CD4-positive, alpha-beta T cell (primary cell): ENCODE measurements at regions of chrX and their contacts with region 1.

Region 1: DNA sequence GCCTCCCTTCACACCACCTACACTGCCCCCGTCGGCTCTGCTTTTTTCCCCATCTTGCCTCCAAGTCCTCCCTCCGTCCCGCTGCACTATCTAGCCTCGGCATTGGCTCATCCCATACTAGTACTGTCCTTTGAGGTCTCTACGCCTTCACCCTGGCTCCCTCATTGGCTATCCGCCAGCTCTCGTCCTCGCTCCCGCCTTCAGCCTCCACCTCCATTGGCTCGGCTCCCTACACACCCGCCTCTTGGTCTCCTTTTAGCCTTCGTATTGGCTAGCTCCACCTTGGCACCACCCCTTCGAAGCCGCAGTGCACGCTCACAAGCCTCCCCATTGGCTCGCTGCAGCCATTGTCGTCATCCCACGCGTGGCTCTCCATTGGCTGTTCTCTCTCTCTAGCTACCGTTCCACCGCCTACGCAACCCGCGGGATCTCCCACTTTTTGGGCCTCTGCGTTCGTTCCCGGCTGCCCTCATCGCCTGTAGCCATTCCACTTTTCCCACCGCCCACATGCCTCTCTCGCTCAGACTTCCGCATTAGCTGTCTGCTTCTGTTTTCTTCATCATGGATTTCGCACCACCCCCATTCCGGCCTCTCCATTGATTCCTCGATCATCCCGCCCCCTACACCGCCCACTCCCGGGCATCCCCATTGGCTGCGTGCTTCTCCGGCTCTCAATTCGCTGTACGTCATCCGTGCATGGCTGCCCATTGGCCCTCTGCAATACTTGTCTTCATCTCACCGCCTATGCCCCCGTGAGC is 404 bp upstream of the PPP1R3F start:
- DNase-seq: peak; percentile 85 to 98 (median 90)
- ATAC-seq: peak; percentile 82
- H3K4me3 ChIP-seq: peak overlapping the region; percentile 69
- H3K4me3 Mint-ChIP-seq: peak overlapping the region; percentile 91
- H3K27ac ChIP-seq: peak overlapping the region; percentile 96 to 98
- H3K27ac Mint-ChIP-seq: peak overlapping the region; percentile 99
- H3K4me1 ChIP-seq: peaks cover 57% of the 10 kb centered on the region
- H3K4me1 Mint-ChIP-seq: peaks cover 49% of the 10 kb centered on the region
- H3K27me3 ChIP-seq: no peaks in the 10 kb centered on the region
- H3K27me3 Mint-ChIP-seq: no peaks in the 10 kb centered on the region
- CTCF ChIP-seq: no peak

Region 2: DNA sequence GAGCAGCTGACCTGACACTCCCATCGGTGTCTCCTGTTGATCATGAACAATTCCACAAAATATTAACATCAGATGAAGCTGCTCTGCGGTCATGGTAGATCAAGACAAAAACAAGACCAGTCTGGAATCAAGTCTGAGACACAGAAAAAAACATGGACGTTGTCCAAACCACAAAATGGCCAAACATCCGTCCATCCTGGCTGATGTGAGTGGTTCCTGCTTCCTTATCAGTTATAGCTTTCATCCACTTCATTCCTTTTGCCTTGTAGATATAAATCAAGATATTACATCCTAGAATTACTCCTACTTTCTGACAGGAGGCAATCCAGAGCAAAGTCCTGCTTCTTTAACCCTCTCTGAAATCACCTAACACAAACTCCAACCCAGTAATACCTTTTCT is 405.0 kb before region 1 on chrX:
- CTCF ChIA-PET with region 1: no interaction called
- POLR2A ChIA-PET with region 1: no interaction called
- intact Hi-C with region 1: no loop called
- DNase-seq: no peak
- ATAC-seq: no peak
- H3K4me3 ChIP-seq: no peak overlapping the region
- H3K4me3 Mint-ChIP-seq: no peak overlapping the region
- H3K27ac ChIP-seq: no peak overlapping the region
- H3K27ac Mint-ChIP-seq: no peak overlapping the region
- H3K4me1 ChIP-seq: no peaks in the 10 kb centered on the region
- H3K4me1 Mint-ChIP-seq: no peaks in the 10 kb centered on the region
- H3K27me3 ChIP-seq: no peaks in the 10 kb centered on the region
- H3K27me3 Mint-ChIP-seq: peaks cover 7% of the 10 kb centered on the region
- CTCF ChIP-seq: no peak

Region 3: GRCh38 chrX:49199906-49200771 is 69.0 kb before region 1 on chrX and contains the start of gene SYP:
- CTCF ChIA-PET with region 1: no interaction called
- POLR2A ChIA-PET with region 1: no interaction called
- intact Hi-C with region 1: loop called in 1 of 2 experiments (anchors 5 kb)
- DNase-seq: peak; percentile 79 to 93 (median 88)
- ATAC-seq: peak; percentile 99
- H3K4me3 ChIP-seq: peak within 1 kb of the TSS; percentile 51
- H3K4me3 Mint-ChIP-seq: peak within 1 kb of the TSS; percentile 69
- H3K27ac ChIP-seq: no peak within 1 kb of the TSS
- H3K27ac Mint-ChIP-seq: peak within 1 kb of the TSS; percentile 69
- H3K4me1 ChIP-seq: peaks cover 21% of the 10 kb centered on the region
- H3K4me1 Mint-ChIP-seq: peaks cover 14% of the 10 kb centered on the region
- H3K27me3 ChIP-seq: peaks cover 0 to 3% of the 10 kb centered on the region in 2 experiments
- H3K27me3 Mint-ChIP-seq: no peaks in the 10 kb centered on the region
- CTCF ChIP-seq: no peak
- total RNA-seq, gene SYP: 0.17 to 0.69 TPM

Region 4: GRCh38 chrX:49230469-49231232 is 38.5 kb before region 1 on chrX:
- CTCF ChIA-PET with region 1: no interaction called
- POLR2A ChIA-PET with region 1: interaction called, 18 read pairs
- intact Hi-C with region 1: loop called in 1 of 2 experiments (anchors 5 kb)
- DNase-seq: peak; percentile 20 to 73 (median 42)
- ATAC-seq: peak; percentile 64
- H3K4me3 ChIP-seq: peak overlapping the region; percentile 53
- H3K4me3 Mint-ChIP-seq: peak overlapping the region; percentile 77
- H3K27ac ChIP-seq: peak overlapping the region in 1 of 2 donors; percentile 13
- H3K27ac Mint-ChIP-seq: peak overlapping the region; percentile 87
- H3K4me1 ChIP-seq: peaks cover 21% of the 10 kb centered on the region
- H3K4me1 Mint-ChIP-seq: peaks cover 30% of the 10 kb centered on the region
- H3K27me3 ChIP-seq: no peaks in the 10 kb centered on the region
- H3K27me3 Mint-ChIP-seq: no peaks in the 10 kb centered on the region
- CTCF ChIP-seq: no peak

Region 5: DNA sequence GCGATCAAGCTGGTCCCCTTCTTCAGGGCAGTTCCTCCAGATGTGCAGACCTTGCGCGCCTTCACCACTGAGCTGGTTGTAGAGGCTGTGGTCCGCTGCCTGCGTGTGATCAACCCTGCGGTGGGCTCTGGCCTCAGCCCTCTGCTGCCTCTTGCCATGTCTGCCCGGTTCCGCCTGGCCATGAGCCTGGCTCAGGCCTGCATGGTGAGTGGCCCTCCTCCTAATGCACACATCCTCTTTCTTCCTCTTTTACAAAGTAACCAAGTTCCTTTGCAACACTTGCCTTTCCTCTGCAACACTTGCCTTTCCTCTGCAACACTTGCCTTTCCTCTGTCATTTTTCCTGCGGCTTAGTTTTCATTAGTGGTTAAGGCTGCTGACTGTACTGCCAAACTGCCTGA is 32.1 kb before region 1 on chrX:
- CTCF ChIA-PET with region 1: no interaction called
- POLR2A ChIA-PET with region 1: interaction called, 18 read pairs
- intact Hi-C with region 1: loop called in 1 of 2 experiments (anchors 5 kb)
- DNase-seq: peak in 2 of 14 experiments; percentile 27 to 35
- ATAC-seq: no peak
- H3K4me3 ChIP-seq: no peak overlapping the region
- H3K4me3 Mint-ChIP-seq: peak overlapping the region; percentile 80
- H3K27ac ChIP-seq: no peak overlapping the region
- H3K27ac Mint-ChIP-seq: peak overlapping the region; percentile 91
- H3K4me1 ChIP-seq: peaks cover 35% of the 10 kb centered on the region
- H3K4me1 Mint-ChIP-seq: peaks cover 34% of the 10 kb centered on the region
- H3K27me3 ChIP-seq: no peaks in the 10 kb centered on the region
- H3K27me3 Mint-ChIP-seq: no peaks in the 10 kb centered on the region
- CTCF ChIP-seq: no peak

Region 6: GRCh38 chrX:49257846-49258748 is 11.1 kb before region 1 on chrX:
- CTCF ChIA-PET with region 1: no interaction called
- POLR2A ChIA-PET with region 1: interaction called, 37 read pairs
- intact Hi-C with region 1: no loop called
- DNase-seq: peak in 8 of 14 experiments; percentile 28 to 58 (median 40)
- ATAC-seq: peak; percentile 60
- H3K4me3 ChIP-seq: peak overlapping the region; percentile 19
- H3K4me3 Mint-ChIP-seq: peak overlapping the region; percentile 15
- H3K27ac ChIP-seq: peak overlapping the region; percentile 21 to 30
- H3K27ac Mint-ChIP-seq: peak overlapping the region; percentile 77
- H3K4me1 ChIP-seq: peaks cover 43% of the 10 kb centered on the region
- H3K4me1 Mint-ChIP-seq: peaks cover 31% of the 10 kb centered on the region
- H3K27me3 ChIP-seq: no peaks in the 10 kb centered on the region
- H3K27me3 Mint-ChIP-seq: no peaks in the 10 kb centered on the region
- CTCF ChIP-seq: no peak

Region 7: GRCh38 chrX:49291615-49292337 is 22.6 kb after region 1 on chrX:
- CTCF ChIA-PET with region 1: interaction called, 4 read pairs
- POLR2A ChIA-PET with region 1: interaction called, 6 read pairs
- intact Hi-C with region 1: loop called in 1 of 2 experiments (anchors 2 kb)
- DNase-seq: peak; percentile 48 to 81 (median 61)
- ATAC-seq: peak; percentile 98
- H3K4me3 ChIP-seq: no peak overlapping the region
- H3K4me3 Mint-ChIP-seq: no peak overlapping the region
- H3K27ac ChIP-seq: no peak overlapping the region
- H3K27ac Mint-ChIP-seq: peak overlapping the region; percentile 38
- H3K4me1 ChIP-seq: peaks cover 35% of the 10 kb centered on the region
- H3K4me1 Mint-ChIP-seq: peaks cover 28% of the 10 kb centered on the region
- H3K27me3 ChIP-seq: no peaks in the 10 kb centered on the region
- H3K27me3 Mint-ChIP-seq: no peaks in the 10 kb centered on the region
- CTCF ChIP-seq: peak; percentile 42

Region 8: DNA sequence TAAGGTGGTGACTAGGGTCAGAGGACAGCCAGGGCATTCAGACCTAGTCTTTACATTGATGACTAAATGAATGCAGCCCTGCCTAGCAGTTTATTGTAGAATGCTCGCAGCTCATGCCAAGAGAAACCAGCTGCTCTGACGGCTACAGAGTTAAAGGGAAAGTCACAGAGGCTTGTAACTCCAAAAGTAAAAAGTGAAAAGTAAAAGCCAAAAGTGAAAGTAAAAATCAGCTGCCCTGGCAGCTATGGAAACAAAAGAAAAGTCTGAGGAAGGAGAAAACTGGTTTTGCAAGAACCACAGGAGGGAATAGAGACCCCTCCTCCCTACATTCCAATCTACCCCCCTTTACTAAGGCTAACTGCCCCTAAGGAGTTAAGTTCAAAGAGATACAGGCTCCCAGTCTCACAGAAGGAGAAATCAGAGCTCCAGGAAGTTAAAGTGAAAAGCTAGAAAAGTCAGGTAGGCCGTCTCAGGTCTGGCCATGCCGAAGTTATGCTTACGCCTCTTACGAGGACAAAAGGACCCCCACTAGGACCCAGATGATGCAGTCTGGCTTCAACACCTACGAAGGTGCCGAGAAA is 40.3 kb after region 1 on chrX:
- CTCF ChIA-PET with region 1: no interaction called
- POLR2A ChIA-PET with region 1: interaction called, 41 read pairs
- intact Hi-C with region 1: loop called (anchors 5 kb)
- DNase-seq: peak in 6 of 14 experiments; percentile 2 to 51 (median 36)
- ATAC-seq: peak; percentile 72
- H3K4me3 ChIP-seq: peak overlapping the region; percentile 58
- H3K4me3 Mint-ChIP-seq: peak overlapping the region; percentile 88
- H3K27ac ChIP-seq: peak overlapping the region; percentile 26 to 63
- H3K27ac Mint-ChIP-seq: peak overlapping the region; percentile 98
- H3K4me1 ChIP-seq: peaks cover 21% of the 10 kb centered on the region
- H3K4me1 Mint-ChIP-seq: peaks cover 25% of the 10 kb centered on the region
- H3K27me3 ChIP-seq: no peaks in the 10 kb centered on the region
- H3K27me3 Mint-ChIP-seq: no peaks in the 10 kb centered on the region
- CTCF ChIP-seq: no peak